H1 (cell line): ENCODE measurements at regions of chr9 and their contacts with region 1.

Region 1: GRCh38 chr9:104882086-104882485 is 45.9 kb downstream of the ABCA1 start:
- DNase-seq: no peak
- H3K4me3 ChIP-seq: no peak overlapping the region
- H3K27ac ChIP-seq: no peak overlapping the region
- H3K4me1 ChIP-seq: peaks cover 4 to 30% (median 20%) of the 10 kb centered on the region in 4 experiments
- H3K27me3 ChIP-seq: no peaks in the 10 kb centered on the region
- CTCF ChIP-seq: no peak
- EP300 ChIP-seq: no peak
- POLR2A ChIP-seq: no peak
- RAD21 ChIP-seq: no peak

Region 2: DNA sequence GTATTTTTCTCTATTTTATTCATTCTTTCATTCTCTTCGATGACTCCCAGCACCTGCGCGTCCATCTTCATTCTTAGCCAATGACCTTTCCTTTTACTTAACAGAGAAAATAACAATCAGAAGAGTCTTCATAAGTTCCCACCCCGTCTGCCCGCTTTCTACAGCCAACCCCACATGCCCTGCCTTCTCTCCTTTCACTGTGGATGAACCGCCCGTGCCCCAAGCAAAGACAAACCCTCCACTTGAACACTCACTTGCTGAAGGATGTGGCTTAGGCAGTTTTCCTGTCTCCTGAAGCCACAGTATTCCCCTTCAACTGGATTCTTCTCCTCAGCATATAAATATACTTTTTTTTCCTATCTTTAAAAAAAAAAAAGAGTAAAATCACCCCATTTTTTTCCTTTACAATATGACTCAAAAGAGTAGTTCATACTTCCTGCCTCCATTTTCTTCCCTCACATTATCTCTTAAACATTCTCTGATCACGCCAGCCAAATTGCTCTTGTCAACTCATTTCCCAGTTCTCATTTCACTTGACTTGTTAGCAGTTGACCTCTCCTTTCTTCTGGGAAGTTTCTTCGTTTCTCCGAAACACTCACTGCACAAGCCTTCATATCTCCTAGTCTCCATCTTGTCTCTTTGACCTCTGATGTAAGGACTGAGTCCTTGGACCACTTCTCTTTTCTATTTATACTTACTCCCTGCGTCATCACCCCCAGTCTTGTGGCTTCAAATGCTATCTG is 107.1 kb before region 1 on chr9:
- CTCF ChIA-PET with region 1: no interaction called
- POLR2A ChIA-PET with region 1: no interaction called
- DNase-seq: no peak
- H3K4me3 ChIP-seq: no peak overlapping the region
- H3K27ac ChIP-seq: no peak overlapping the region
- H3K4me1 ChIP-seq: no peaks in the 10 kb centered on the region
- H3K27me3 ChIP-seq: no peaks in the 10 kb centered on the region
- CTCF ChIP-seq: no peak
- EP300 ChIP-seq: no peak
- POLR2A ChIP-seq: no peak
- RAD21 ChIP-seq: no peak

Region 3: GRCh38 chr9:104863180-104863883 is 18.8 kb before region 1 on chr9:
- CTCF ChIA-PET with region 1: interaction called, 13 read pairs
- POLR2A ChIA-PET with region 1: interaction called, 5 read pairs
- DNase-seq: no peak
- H3K4me3 ChIP-seq: peak overlapping the region in 1 of 4 experiments; percentile 7; a peak in 1 of 8 replicates
- H3K27ac ChIP-seq: no peak overlapping the region
- H3K4me1 ChIP-seq: peaks cover 14 to 30% (median 26%) of the 10 kb centered on the region in 4 experiments
- H3K27me3 ChIP-seq: no peaks in the 10 kb centered on the region
- CTCF ChIP-seq: peak in 2 of 3 experiments; percentile 65 to 86; a peak in 3 of 4 replicates
- EP300 ChIP-seq: no peak
- POLR2A ChIP-seq: no peak
- RAD21 ChIP-seq: peak; percentile 89 to 90

Region 4: DNA sequence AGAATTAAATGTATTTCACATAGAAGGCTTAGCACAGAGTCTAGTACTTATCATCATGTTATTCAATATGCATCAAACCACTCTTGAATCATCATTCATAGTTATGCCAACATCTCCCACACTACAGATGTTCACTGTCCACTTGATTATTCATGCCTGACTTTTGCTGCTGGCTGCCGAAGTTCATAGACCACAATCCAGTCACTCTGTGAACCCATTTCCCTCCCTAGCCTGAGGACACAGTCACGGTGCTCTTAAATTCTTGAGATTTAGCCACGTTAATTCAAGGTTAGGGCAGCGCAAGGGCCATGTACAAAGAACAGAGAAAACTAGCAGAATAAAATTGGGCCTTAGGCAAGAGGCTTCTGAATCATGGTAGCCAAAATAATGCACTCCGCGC is 13.5 kb after region 1 on chr9:
- CTCF ChIA-PET with region 1: no interaction called
- POLR2A ChIA-PET with region 1: no interaction called
- DNase-seq: no peak
- H3K4me3 ChIP-seq: no peak overlapping the region
- H3K27ac ChIP-seq: no peak overlapping the region
- H3K4me1 ChIP-seq: peaks cover 0 to 4% (median 1%) of the 10 kb centered on the region in 4 experiments; a peak in 1 of 7 replicates
- H3K27me3 ChIP-seq: no peaks in the 10 kb centered on the region
- CTCF ChIP-seq: no peak
- EP300 ChIP-seq: no peak
- POLR2A ChIP-seq: no peak
- RAD21 ChIP-seq: no peak